Activated CD4-positive, alpha-beta T cell treated with anti-CD3 and anti-CD28 coated beads for 36 hours (primary cell): ENCODE measurements at regions of chr6 and their contacts with region 1.

Region 1: GRCh38 chr6:56955171-56956045 is 501 bp downstream of the BEND6 start:
- DNase-seq: peak; percentile 84
- ATAC-seq: peak; percentile 71
- H3K4me3 Mint-ChIP-seq: peak overlapping the region; percentile 59
- H3K27ac Mint-ChIP-seq: no peak overlapping the region
- H3K4me1 Mint-ChIP-seq: peaks cover 20% of the 10 kb centered on the region
- H3K27me3 Mint-ChIP-seq: peaks cover 56% of the 10 kb centered on the region

Region 2: DNA sequence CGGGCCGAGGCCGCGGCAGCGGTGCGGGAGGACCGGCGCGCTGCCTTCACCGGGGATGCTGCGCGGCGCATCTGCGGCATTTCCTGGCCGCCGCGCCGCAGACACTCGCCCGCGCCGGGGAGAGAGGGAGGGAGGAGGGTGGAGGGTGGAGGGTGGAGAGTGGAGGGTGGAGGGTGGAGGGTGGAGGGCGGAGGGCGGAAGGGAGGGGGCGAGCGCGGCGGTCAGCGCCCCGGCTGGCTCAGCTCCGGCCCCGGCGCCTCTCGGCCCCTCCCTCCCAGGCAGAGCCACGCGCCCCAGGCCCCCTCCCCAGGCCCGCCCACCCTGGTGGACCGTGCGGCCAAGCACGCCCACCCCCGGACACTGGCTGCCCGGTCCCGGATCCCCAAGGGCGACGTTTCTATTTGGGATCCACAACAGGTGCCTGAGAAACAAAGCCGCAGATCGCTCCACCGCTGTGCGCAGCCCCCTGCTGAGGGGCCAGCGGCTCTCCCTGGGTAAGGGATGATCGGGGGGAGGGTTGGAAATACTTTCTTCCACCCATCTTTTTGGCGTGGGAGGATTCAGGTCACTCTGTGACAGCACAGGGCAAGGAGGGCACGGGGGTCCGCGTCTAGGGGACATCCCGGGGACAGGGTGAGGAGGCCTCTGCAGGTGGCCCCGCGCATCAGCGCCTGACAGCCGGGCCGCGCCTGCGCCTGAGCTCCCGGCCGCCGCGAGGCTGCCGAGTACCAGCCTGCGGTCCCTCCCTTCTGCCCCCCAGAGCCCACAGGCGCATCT is 111.6 kb before region 1 on chr6:
- CTCF ChIA-PET with region 1: no interaction called
- POLR2A ChIA-PET with region 1: no interaction called
- intact Hi-C with region 1: loop called in 1 of 2 experiments (anchors 5 kb)
- DNase-seq: peak; percentile 82
- ATAC-seq: peak; percentile 97
- H3K4me3 Mint-ChIP-seq: peak overlapping the region; percentile 68
- H3K27ac Mint-ChIP-seq: no peak overlapping the region
- H3K4me1 Mint-ChIP-seq: peaks cover 4% of the 10 kb centered on the region
- H3K27me3 Mint-ChIP-seq: peaks cover 47% of the 10 kb centered on the region

Region 3: DNA sequence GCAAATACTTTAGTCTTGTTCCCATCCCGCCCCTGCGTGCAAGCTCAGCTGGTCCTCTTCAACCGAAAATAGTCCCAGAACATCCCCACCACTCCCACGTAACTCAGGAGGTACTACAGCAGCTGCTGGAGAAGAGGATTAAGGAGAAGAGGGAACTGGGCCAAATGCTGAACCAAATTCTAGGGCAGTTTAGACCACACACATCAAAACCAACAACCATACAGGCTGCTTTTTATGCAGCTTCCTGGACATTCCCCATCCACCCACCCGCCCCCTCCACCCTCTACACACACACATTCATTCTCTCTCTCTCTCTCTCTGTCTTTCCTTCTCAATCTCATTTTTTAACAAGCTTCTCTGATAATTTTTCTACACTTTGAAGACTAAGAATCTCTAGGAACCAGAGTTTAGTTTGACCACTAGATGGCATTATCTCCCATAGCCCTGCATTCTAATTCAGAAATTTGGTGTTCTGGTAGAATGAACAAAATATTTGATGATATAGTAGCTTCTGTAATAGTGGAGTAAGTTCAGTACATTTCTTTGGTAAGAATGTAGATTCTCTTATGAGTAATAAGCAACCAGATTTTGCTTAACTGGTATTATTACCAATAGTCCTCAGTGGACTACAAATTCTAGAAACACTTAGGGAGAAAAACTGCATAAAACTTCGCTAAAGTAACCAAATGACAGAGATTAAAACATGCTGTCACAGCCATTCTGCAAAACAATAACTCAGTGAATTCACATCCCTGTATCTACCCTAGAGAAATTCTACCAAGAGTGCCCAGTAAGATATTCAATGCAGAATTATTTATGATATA is 52.6 kb before region 1 on chr6:
- CTCF ChIA-PET with region 1: interaction called, 9 read pairs
- POLR2A ChIA-PET with region 1: no interaction called
- intact Hi-C with region 1: loop called (anchors 2 kb)
- DNase-seq: no peak
- ATAC-seq: no peak
- H3K4me3 Mint-ChIP-seq: no peak overlapping the region
- H3K27ac Mint-ChIP-seq: no peak overlapping the region
- H3K4me1 Mint-ChIP-seq: no peaks in the 10 kb centered on the region
- H3K27me3 Mint-ChIP-seq: peaks cover 9% of the 10 kb centered on the region

Region 4: GRCh38 chr6:57048577-57048976 is 93.2 kb after region 1 on chr6:
- CTCF ChIA-PET with region 1: no interaction called
- POLR2A ChIA-PET with region 1: no interaction called
- intact Hi-C with region 1: loop called in 1 of 2 experiments (anchors 2 kb)
- DNase-seq: no peak
- ATAC-seq: no peak
- H3K4me3 Mint-ChIP-seq: peak overlapping the region; percentile 63
- H3K27ac Mint-ChIP-seq: peak overlapping the region; percentile 40
- H3K4me1 Mint-ChIP-seq: peaks cover 28% of the 10 kb centered on the region
- H3K27me3 Mint-ChIP-seq: peaks cover 9% of the 10 kb centered on the region

Region 5: DNA sequence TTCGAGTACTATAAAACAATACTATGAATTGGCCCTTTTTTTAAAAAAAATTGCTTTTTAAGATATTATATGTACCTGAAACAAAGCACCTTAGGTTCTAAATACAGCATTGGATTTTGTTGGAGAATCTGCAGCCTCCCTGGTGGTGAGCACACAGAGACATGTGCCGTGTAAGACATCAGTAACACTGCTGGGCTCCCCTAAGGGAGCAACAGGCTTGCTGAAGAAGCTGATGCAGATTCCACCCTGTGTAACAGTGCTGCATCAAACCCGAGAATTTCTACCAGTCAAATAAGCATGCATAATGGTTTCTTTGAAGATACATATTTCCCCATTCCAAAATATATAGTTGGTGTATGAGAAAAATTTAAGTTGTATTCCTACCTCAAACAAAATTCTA is 108.4 kb after region 1 on chr6:
- CTCF ChIA-PET with region 1: no interaction called
- POLR2A ChIA-PET with region 1: no interaction called
- intact Hi-C with region 1: no loop called
- DNase-seq: no peak
- ATAC-seq: no peak
- H3K4me3 Mint-ChIP-seq: no peak overlapping the region
- H3K27ac Mint-ChIP-seq: no peak overlapping the region
- H3K4me1 Mint-ChIP-seq: no peaks in the 10 kb centered on the region
- H3K27me3 Mint-ChIP-seq: no peaks in the 10 kb centered on the region

Region 6: GRCh38 chr6:57172136-57173055 is 217.0 kb after region 1 on chr6 and contains the start of gene BAG2:
- CTCF ChIA-PET with region 1: no interaction called
- POLR2A ChIA-PET with region 1: no interaction called
- intact Hi-C with region 1: loop called (anchors 2 to 5 kb)
- DNase-seq: peak; percentile 94
- ATAC-seq: peak; percentile 89
- H3K4me3 Mint-ChIP-seq: peak within 1 kb of the TSS; percentile 87
- H3K27ac Mint-ChIP-seq: peak within 1 kb of the TSS; percentile 96
- H3K4me1 Mint-ChIP-seq: peaks cover 35% of the 10 kb centered on the region
- H3K27me3 Mint-ChIP-seq: no peaks in the 10 kb centered on the region
- total RNA-seq, gene BAG2: 8.2 to 8.8 TPM

Region 7: GRCh38 chr6:57267586-57268293 is 312.3 kb after region 1 on chr6:
- CTCF ChIA-PET with region 1: no interaction called
- POLR2A ChIA-PET with region 1: no interaction called
- intact Hi-C with region 1: loop called in 1 of 2 experiments (anchors 1 kb)
- DNase-seq: peak; percentile 62
- ATAC-seq: peak; percentile 52
- H3K4me3 Mint-ChIP-seq: no peak overlapping the region
- H3K27ac Mint-ChIP-seq: no peak overlapping the region
- H3K4me1 Mint-ChIP-seq: peaks cover 27% of the 10 kb centered on the region
- H3K27me3 Mint-ChIP-seq: peaks cover 14% of the 10 kb centered on the region